Heart right ventricle (tissue), 16 donors: ENCODE measurements at regions of chr12 and their contacts with region 1.

Region 1: GRCh38 chr12:27332407-27333301 is at the start of gene BMAL2:
- DNase-seq: peak; percentile 11 to 46
- ATAC-seq: peak; percentile 60 to 82 (median 66)
- H3K4me3 ChIP-seq: peak within 1 kb of the TSS; percentile 57 to 85 (median 68)
- H3K27ac ChIP-seq: peak within 1 kb of the TSS in 2 of 10 donors; percentile 40 to 69
- H3K4me1 ChIP-seq: peaks cover 0 to 32% (median 9%) of the 10 kb centered on the region in 9 donors
- H3K27me3 ChIP-seq: peaks cover 0 to 21% (median 0%) of the 10 kb centered on the region in 7 donors
- CTCF ChIP-seq: no peak
- total RNA-seq, gene BMAL2: 1.1 to 9.4 (median 2.8) TPM

Region 2: GRCh38 chr12:27652174-27652763 is 319.6 kb after region 1 on chr12:
- intact Hi-C with region 1: loop called in 1 of 10 experiments (anchors 10 kb)
- DNase-seq: peak in 1 of 2 donors; percentile 85
- ATAC-seq: peak in 7 of 8 donors; percentile 75 to 87 (median 82)
- H3K4me3 ChIP-seq: no peak overlapping the region
- H3K27ac ChIP-seq: no peak overlapping the region
- H3K4me1 ChIP-seq: peaks cover 0 to 15% (median 0%) of the 10 kb centered on the region in 9 donors
- H3K27me3 ChIP-seq: no peaks in the 10 kb centered on the region
- CTCF ChIP-seq: peak; percentile 74 to 95 (median 89)

Region 3: DNA sequence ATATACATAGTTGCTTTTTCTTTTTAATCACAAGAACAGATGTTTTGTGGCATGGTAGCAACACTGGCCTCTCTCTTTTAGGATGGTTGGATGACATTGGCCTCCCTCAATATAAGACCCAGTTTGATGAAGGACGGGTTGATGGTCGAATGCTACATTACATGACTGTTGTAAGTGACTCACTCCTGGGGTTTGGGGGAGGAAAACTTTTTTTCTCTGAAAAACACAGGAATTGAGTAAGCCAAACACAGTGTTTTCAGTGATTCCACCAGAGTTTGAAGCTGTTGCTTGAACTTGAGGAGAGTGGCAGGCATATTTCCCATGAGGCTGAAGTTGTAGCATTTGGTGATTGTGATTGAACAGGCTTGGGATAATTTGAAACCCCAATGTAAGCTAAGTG is 349.9 kb after region 1 on chr12:
- intact Hi-C with region 1: loop called in 1 of 10 experiments (anchors 10 kb)
- DNase-seq: no peak
- ATAC-seq: no peak
- H3K4me3 ChIP-seq: no peak overlapping the region
- H3K27ac ChIP-seq: no peak overlapping the region
- H3K4me1 ChIP-seq: no peaks in the 10 kb centered on the region
- H3K27me3 ChIP-seq: no peaks in the 10 kb centered on the region
- CTCF ChIP-seq: no peak

Region 4: GRCh38 chr12:27703710-27704452 is 371.2 kb after region 1 on chr12:
- intact Hi-C with region 1: loop called in 1 of 10 experiments (anchors 10 kb)
- DNase-seq: peak in 1 of 2 donors; percentile 65
- ATAC-seq: peak; percentile 57 to 86 (median 82)
- H3K4me3 ChIP-seq: no peak overlapping the region
- H3K27ac ChIP-seq: no peak overlapping the region
- H3K4me1 ChIP-seq: peaks cover 0 to 11% (median 0%) of the 10 kb centered on the region in 9 donors
- H3K27me3 ChIP-seq: no peaks in the 10 kb centered on the region
- CTCF ChIP-seq: peak; percentile 59 to 91 (median 83)